Mammary epithelial cell (primary cell): ENCODE measurements at regions of chr12 and their contacts with region 1.

Region 1: DNA sequence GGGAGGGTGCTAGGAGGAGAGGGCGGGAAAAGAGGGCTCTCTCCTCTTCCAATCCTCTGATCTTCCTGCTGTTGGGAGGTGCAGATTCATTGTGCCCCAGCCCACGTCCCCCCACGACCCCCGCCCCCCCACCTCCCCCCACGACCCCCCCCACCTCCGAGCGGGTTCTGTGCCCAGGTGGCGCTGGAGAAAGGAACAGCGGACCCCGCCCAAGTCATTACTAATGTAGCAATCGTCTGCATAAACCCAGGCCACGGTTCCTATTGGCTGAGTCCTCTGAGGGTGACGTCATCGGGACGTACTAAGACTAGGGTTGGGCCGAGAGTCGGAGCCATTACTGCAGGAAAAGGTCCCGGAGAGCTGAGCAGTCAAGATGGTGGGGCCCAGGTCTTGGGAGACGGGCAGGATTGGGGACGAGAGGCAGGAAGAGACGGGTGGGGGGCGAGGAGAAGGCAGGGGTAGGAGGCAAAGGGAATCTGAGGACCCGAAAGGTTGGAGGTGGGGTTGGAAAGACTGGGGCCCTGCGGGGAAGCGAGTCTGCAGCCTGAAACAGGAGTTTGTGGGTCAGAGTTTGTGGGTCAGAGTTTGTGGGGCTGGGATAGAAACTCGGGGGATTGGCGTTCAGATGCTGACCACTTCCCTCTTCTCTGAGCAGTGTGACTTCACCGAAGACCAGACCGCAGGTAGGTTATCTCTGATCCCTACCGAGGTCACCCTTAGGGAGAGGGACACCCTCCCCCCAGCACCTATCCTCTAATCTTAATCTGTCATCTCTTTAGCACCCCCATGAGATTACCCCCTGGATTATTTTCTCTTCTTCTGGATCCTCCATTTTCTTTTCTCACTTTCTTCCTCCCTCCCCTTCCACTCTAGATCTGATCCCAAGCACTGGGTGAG is at the start of gene MYL6:
- DNase-seq: peak; percentile 95
- H3K4me3 ChIP-seq: peak within 1 kb of the TSS; percentile 72 to 92 (median 82)
- H3K27ac ChIP-seq: peak within 1 kb of the TSS; percentile 96
- H3K4me1 ChIP-seq: peaks cover 26% of the 10 kb centered on the region
- H3K27me3 ChIP-seq: no peaks in the 10 kb centered on the region
- CTCF ChIP-seq: no peak
- total RNA-seq, gene MYL6: 732 to 1,042 TPM

Region 2: DNA sequence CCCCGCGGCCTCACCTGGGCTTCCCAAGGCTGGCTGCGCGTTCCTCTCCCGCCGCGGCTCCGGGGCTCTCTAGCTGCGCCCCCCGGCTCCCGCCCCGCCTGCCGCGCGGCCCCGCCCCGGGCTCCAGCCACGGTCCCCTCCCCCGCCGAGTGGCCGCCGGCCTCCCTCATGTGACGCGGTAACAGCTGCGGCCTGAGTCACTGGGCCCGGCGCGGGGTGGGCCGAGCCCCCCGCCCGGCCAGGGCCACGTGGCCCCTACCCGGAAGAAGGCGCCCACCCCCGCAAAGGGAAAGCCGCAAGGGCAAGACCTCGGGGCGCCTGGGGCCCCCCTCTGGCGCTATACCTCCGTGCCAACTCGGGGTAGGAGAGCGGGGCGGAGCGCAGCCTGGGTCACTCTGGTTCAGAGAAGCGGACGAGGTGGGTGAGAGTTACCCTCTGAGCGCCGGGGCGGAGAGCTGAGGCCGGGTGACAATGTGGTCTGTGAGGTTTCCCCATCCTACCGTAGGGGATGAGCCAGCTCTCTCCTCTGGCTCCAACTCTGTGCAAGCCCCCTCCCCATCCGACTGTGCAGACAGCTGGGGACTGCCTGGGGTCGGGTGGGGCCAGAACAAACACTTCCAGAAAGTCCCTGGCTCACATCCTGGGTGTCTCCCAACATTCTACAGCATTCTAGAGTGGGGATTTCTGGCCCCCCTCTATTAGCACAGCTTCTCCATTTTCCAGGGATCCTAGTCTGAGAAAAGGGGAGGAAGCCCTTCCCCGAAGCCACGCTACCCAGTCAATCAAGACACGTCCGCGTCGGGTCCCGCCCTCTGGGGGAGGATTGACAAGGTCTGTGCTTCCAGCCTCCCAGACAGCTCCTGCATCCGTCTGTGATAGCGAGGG is 429.1 kb before region 1 on chr12 and contains the start of gene CD63:
- CTCF ChIA-PET with region 1: interaction called, 11 read pairs
- dilution Hi-C with region 1: no loop called
- in situ Hi-C with region 1: no loop called
- intact Hi-C with region 1: no loop called
- DNase-seq: peak; percentile 93
- H3K4me3 ChIP-seq: peak within 1 kb of the TSS; percentile 77 to 91 (median 89)
- H3K27ac ChIP-seq: peak within 1 kb of the TSS; percentile 81
- H3K4me1 ChIP-seq: peaks cover 24% of the 10 kb centered on the region
- H3K27me3 ChIP-seq: no peaks in the 10 kb centered on the region
- CTCF ChIP-seq: no peak
- total RNA-seq, gene CD63: 552 to 814 TPM

Region 3: GRCh38 chr12:56127888-56128669 is 30.2 kb before region 1 on chr12 and contains the start of gene ESYT1:
- CTCF ChIA-PET with region 1: no interaction called
- dilution Hi-C with region 1: no loop called
- in situ Hi-C with region 1: no loop called
- intact Hi-C with region 1: loop called (anchors 1 kb)
- DNase-seq: peak; percentile 100
- H3K4me3 ChIP-seq: peak within 1 kb of the TSS; percentile 74 to 86 (median 81)
- H3K27ac ChIP-seq: peak within 1 kb of the TSS; percentile 82
- H3K4me1 ChIP-seq: peaks cover 18% of the 10 kb centered on the region
- H3K27me3 ChIP-seq: no peaks in the 10 kb centered on the region
- CTCF ChIP-seq: no peak
- total RNA-seq, gene ESYT1: 166 to 366 TPM

Region 4: GRCh38 chr12:56178347-56178746 is 20.1 kb after region 1 on chr12:
- CTCF ChIA-PET with region 1: no interaction called
- dilution Hi-C with region 1: no loop called
- in situ Hi-C with region 1: no loop called
- intact Hi-C with region 1: no loop called
- DNase-seq: no peak
- H3K4me3 ChIP-seq: no peak overlapping the region
- H3K27ac ChIP-seq: no peak overlapping the region
- H3K4me1 ChIP-seq: no peaks in the 10 kb centered on the region
- H3K27me3 ChIP-seq: no peaks in the 10 kb centered on the region
- CTCF ChIP-seq: no peak